ENCODE measurements at regions of chr1 and their contacts with region 1.

Region 1: GRCh38 chr1:50368179-50369012 is 54.8 kb downstream of the DMRTA2 start:
- DNase-seq: no peak
- ATAC-seq: peak in 2 of 4 donors; percentile 43 to 58
- H3K4me3 ChIP-seq: no peak overlapping the region
- H3K27ac ChIP-seq: no peak overlapping the region
- H3K4me1 ChIP-seq: no peaks in the 10 kb centered on the region
- H3K27me3 ChIP-seq: peaks cover 0 to 28% (median 2%) of the 10 kb centered on the region in 3 donors
- CTCF ChIP-seq: peak; percentile 62

Region 2: DNA sequence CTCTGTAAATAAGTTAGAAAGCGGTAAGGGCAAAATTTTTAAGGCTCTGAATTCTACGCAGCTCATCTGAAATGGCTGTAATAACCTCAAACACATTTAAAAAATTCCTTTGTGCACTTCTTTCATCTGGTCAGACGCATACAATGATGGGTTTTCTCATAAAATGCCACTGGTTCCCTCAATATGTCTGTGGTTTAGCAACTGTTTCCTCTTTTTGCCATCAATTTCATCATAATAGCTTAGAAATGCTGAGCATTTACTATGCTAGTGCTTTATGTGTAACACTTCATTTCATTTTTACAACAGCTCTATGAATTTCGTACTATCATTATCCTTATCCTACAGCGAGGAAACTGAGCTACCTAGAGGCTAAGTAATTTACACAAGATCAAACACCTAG is 90.1 kb after region 1 on chr1:
- intact Hi-C with region 1: no loop called
- DNase-seq: no peak
- ATAC-seq: no peak
- H3K4me3 ChIP-seq: no peak overlapping the region
- H3K27ac ChIP-seq: no peak overlapping the region
- H3K4me1 ChIP-seq: no peaks in the 10 kb centered on the region
- H3K27me3 ChIP-seq: no peaks in the 10 kb centered on the region
- CTCF ChIP-seq: no peak

Region 3: DNA sequence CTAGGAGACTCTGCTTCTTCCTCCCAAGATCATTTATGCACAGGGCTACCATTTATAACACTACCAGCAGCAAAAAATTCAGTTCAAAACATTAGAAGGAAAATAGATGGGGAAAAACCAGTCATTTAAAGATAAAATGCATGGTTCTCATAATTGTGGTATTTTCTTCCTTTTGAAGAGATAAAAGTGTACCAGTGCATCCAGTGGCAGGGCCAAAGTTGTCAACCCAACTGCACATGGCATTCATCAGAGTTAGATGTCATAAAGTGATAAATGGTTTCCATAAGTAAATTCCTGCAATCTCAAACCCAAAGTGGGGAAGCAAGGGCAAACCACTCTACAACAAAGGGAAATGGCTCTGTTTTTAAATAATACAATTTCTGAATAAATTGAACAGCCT is 174.0 kb after region 1 on chr1:
- intact Hi-C with region 1: no loop called
- DNase-seq: no peak
- ATAC-seq: no peak
- H3K4me3 ChIP-seq: no peak overlapping the region
- H3K27ac ChIP-seq: no peak overlapping the region
- H3K4me1 ChIP-seq: no peaks in the 10 kb centered on the region
- H3K27me3 ChIP-seq: no peaks in the 10 kb centered on the region
- CTCF ChIP-seq: no peak

Region 4: DNA sequence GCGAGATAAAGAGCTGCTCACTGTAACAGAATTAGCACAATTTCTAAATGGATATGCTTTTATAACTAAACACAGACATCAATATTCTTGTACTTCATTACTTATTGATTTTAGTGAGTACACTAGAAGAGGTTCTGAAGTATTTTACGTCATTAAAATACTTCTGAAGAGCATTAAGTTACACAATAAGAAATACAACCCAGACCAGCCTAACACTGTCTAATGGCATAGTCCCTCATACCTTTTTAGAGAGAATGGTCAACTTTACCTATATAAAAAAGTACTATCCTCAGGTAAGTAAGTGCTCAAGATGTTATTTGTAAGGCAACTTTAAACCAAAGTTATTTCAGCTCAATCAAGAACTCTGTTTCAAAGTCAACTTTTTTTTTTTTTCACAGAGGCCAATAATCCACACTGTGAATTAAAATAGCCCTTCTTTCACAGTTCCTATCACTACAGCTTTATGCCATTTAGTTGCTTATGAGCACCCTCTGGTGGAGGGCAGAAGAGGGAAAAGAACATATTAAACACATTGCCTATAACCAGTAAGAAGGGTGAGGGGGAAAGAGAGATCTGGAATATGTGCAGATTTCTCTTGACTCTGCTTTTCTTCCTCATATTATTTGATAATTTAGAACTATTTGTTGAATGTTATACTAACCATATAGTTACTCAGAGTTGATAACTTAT is 236.9 kb after region 1 on chr1:
- intact Hi-C with region 1: loop called (anchors 5 to 10 kb)
- DNase-seq: no peak
- ATAC-seq: no peak
- H3K4me3 ChIP-seq: no peak overlapping the region
- H3K27ac ChIP-seq: no peak overlapping the region
- H3K4me1 ChIP-seq: no peaks in the 10 kb centered on the region
- H3K27me3 ChIP-seq: no peaks in the 10 kb centered on the region
- CTCF ChIP-seq: peak; percentile 26

Region 5: GRCh38 chr1:50703240-50703639 is 334.8 kb after region 1 on chr1:
- intact Hi-C with region 1: loop called in 1 of 2 experiments (anchors 2 kb)
- DNase-seq: no peak
- ATAC-seq: no peak
- H3K4me3 ChIP-seq: no peak overlapping the region
- H3K27ac ChIP-seq: no peak overlapping the region
- H3K4me1 ChIP-seq: peaks cover 35% of the 10 kb centered on the region
- H3K27me3 ChIP-seq: no peaks in the 10 kb centered on the region
- CTCF ChIP-seq: no peak

Measured in psoas muscle (tissue), 8 donors.